Activated T-helper 2 cell treated with anti-CD3 and anti-CD28 coated beads, Interferon-gamma antibody, Interleukin-2, Interleukin-4, amounts not matched to agents 10 μg/mL and 5 μg/mL and 100 μg/mL, durations not matched to agents 14 hours and 24 hours and 36 hours (primary cell): ENCODE measurements at regions of chr9 and their contacts with region 1.

Region 1: DNA sequence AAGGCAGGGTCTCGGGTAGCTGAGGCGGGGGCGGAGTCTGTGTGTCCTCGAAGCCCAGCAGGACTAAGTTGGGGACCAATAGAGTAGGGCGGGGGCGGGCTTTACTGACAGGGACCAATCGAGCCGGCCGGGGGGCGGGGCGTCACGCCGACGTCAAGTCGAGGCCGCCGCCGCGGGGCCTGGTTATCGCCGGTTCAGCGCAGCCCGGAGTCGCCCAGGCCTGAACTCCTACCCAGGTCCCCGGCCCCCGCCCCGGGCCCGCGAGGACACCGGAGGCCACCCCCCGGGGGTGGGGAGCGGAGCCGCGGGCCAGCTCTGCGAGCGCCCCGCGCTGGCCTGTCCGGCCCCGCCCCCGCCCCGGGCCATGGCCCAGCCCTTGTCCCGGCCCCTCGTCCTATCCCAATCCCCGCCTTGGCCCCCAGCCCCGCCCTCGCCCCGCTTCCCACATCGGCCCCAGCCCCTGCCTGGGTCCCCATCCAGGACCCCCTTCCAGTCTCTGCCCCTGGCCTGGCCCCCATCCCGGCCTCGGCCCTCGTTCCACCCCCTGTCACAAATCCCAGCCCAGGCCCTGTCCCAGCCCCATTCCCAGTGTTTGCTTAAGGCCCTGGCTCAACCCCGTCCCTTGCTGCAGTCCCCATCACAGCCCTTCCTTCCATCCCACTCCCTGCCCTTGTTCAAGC is at the start of gene TMEM8B:
- DNase-seq: peak; percentile 86
- H3K4me3 Mint-ChIP-seq: peak within 1 kb of the TSS; percentile 87
- H3K27ac Mint-ChIP-seq: peak within 1 kb of the TSS; percentile 79
- H3K4me1 Mint-ChIP-seq: peaks cover 18% of the 10 kb centered on the region
- H3K27me3 Mint-ChIP-seq: no peaks in the 10 kb centered on the region
- total RNA-seq, gene TMEM8B: 3.0 and 3.4 TPM in 2 replicates

Region 2: GRCh38 chr9:35732122-35732799 is 97.0 kb before region 1 on chr9 and contains the starts of genes CREB3 and TLN1:
- intact Hi-C with region 1: no loop called
- DNase-seq: peak; percentile 97
- H3K4me3 Mint-ChIP-seq: no peak within 1 kb of the TSS
- H3K27ac Mint-ChIP-seq: peak within 1 kb of the TSS; percentile 90
- H3K4me1 Mint-ChIP-seq: peaks cover 25% of the 10 kb centered on the region
- H3K27me3 Mint-ChIP-seq: no peaks in the 10 kb centered on the region
- total RNA-seq, gene CREB3: 34.3 and 34.5 TPM in 2 replicates
- total RNA-seq, gene TLN1: 253 and 267 TPM in 2 replicates

Region 3: GRCh38 chr9:35748858-35749514 is 80.2 kb before region 1 on chr9 and contains the starts of genes GBA2 and RGP1:
- intact Hi-C with region 1: loop called (anchors 5 kb)
- DNase-seq: peak; percentile 70
- H3K4me3 Mint-ChIP-seq: peak within 1 kb of the TSS; percentile 92
- H3K27ac Mint-ChIP-seq: peak within 1 kb of the TSS; percentile 82
- H3K4me1 Mint-ChIP-seq: peaks cover 35% of the 10 kb centered on the region
- H3K27me3 Mint-ChIP-seq: no peaks in the 10 kb centered on the region
- total RNA-seq, gene GBA2: 54.0 and 57.0 TPM in 2 replicates
- total RNA-seq, gene RGP1: 17.0 and 17.1 TPM in 2 replicates

Region 4: GRCh38 chr9:35790385-35791296 is 38.6 kb before region 1 on chr9:
- intact Hi-C with region 1: loop called (anchors 1 kb)
- DNase-seq: peak; percentile 43
- H3K4me3 Mint-ChIP-seq: no peak overlapping the region
- H3K27ac Mint-ChIP-seq: no peak overlapping the region
- H3K4me1 Mint-ChIP-seq: peaks cover 11% of the 10 kb centered on the region
- H3K27me3 Mint-ChIP-seq: no peaks in the 10 kb centered on the region

Region 5: GRCh38 chr9:35882263-35882848 is 53.1 kb after region 1 on chr9:
- intact Hi-C with region 1: loop called (anchors 1 kb)
- DNase-seq: peak; percentile 55
- H3K4me3 Mint-ChIP-seq: no peak overlapping the region
- H3K27ac Mint-ChIP-seq: no peak overlapping the region
- H3K4me1 Mint-ChIP-seq: no peaks in the 10 kb centered on the region
- H3K27me3 Mint-ChIP-seq: peaks cover 33% of the 10 kb centered on the region